ENCODE measurements at regions of chr17 and their contacts with region 1.

Region 1: DNA sequence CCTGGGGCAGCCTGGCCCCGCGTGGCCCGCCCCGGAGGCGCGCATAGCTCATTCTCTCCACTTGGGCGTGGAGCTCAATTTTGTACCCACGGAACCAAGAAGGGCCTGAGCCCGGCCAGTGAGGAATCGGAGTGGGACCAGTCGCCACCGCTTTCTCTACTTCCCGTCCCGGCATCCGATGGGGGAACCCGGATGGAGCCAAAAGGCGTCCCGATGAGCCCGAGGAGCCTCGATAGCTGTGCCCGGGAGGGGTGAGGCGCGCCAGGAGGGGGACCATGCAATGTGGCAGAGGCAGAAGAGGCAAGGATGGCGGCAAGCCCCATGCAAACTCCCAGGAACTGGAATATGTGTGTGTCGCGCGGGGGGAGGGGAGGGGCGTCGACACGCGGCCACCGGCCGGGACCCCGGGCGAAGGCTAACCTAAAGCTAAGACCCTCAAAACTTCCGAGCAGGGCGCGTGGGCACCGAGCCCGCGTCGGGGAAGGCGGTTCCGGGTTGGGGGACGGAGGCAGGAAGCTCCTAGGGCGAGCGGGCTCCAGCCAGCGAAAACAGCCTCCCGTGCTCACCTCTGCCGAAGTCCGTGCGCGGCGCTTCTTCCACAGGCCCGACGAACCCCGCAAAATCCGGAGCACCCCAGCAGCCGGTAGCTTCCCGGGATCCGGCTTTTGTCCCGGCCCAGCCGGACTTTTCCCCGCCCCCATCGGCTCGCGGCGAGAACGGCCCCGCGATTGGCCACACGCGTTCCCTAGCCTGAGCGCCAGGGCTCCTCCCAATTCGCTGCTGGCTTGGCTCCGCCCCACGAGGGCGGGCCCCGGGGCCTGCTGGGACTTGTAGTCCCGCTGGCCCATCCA is at the start of gene ACLY:
- DNase-seq: peak; percentile 91 to 97
- ATAC-seq: peak; percentile 98 to 99 (median 99)
- H3K4me3 ChIP-seq: peak within 1 kb of the TSS; percentile 89
- H3K4me3 Mint-ChIP-seq: peak within 1 kb of the TSS; percentile 96
- H3K27ac ChIP-seq: peak within 1 kb of the TSS; percentile 58
- H3K27ac Mint-ChIP-seq: peak within 1 kb of the TSS; percentile 74 to 91
- H3K4me1 ChIP-seq: peaks cover 20% of the 10 kb centered on the region
- H3K4me1 Mint-ChIP-seq: peaks cover 30 to 37% of the 10 kb centered on the region in 2 donors
- H3K27me3 ChIP-seq: no peaks in the 10 kb centered on the region
- H3K27me3 Mint-ChIP-seq: no peaks in the 10 kb centered on the region
- CTCF ChIP-seq: no peak
- total RNA-seq, gene ACLY: 86.5 to 106 (median 106) TPM

Region 2: DNA sequence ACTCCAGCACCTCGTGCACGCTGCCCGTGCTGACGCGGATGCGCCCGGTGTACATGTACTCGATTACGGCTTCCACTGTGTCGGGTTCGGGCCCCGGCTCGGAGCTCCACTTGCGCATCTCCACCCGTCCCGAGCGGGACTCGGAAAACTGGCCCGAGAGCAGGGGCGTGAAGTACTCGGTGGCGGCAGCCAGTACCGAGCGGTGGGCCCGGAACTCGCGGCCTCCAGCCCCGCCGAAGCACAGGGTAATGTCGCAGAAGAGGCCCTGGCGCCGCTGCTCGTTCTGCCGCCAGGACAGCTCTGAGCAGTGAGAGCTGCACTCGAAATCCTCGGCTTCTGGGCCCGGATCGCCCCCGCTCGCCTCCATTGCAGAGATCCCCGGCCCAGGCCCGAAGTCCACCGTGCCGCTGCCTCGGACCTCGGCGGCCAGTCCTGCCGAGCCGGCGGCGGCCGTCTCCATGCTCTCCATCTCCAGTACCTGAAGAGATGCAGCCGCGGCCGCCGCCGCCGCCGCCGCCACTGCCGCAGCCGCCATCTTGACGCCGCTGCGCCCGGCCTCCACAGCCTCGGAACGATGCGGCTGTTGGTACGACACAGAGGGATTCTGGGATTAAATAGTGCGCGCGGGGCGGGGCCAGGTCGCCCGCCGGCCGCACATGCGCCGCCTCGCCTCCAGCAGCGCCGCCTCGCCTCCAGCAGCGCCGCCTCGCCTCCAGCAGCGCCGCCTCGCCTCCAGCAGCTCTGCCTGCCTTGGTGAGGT is 53.5 kb before region 1 on chr17 and contains the start of gene KLHL11:
- intact Hi-C with region 1: loop called (anchors 1 kb)
- DNase-seq: peak; percentile 83 to 94
- ATAC-seq: peak; percentile 91 to 97 (median 93)
- H3K4me3 ChIP-seq: peak within 1 kb of the TSS; percentile 86
- H3K4me3 Mint-ChIP-seq: no peak within 1 kb of the TSS
- H3K27ac ChIP-seq: peak within 1 kb of the TSS; percentile 81
- H3K27ac Mint-ChIP-seq: no peak within 1 kb of the TSS
- H3K4me1 ChIP-seq: peaks cover 27% of the 10 kb centered on the region
- H3K4me1 Mint-ChIP-seq: peaks cover 16 to 17% of the 10 kb centered on the region in 2 donors
- H3K27me3 ChIP-seq: no peaks in the 10 kb centered on the region
- H3K27me3 Mint-ChIP-seq: no peaks in the 10 kb centered on the region
- CTCF ChIP-seq: no peak
- total RNA-seq, gene KLHL11: 19.4 to 29.0 (median 28.2) TPM

Region 3: GRCh38 chr17:41895617-41896016 is 22.9 kb before region 1 on chr17:
- intact Hi-C with region 1: no loop called
- DNase-seq: no peak
- ATAC-seq: no peak
- H3K4me3 ChIP-seq: no peak overlapping the region
- H3K4me3 Mint-ChIP-seq: no peak overlapping the region
- H3K27ac ChIP-seq: no peak overlapping the region
- H3K27ac Mint-ChIP-seq: no peak overlapping the region
- H3K4me1 ChIP-seq: no peaks in the 10 kb centered on the region
- H3K4me1 Mint-ChIP-seq: peaks cover 0 to 5% of the 10 kb centered on the region in 2 donors
- H3K27me3 ChIP-seq: no peaks in the 10 kb centered on the region
- H3K27me3 Mint-ChIP-seq: no peaks in the 10 kb centered on the region
- CTCF ChIP-seq: no peak

Region 4: DNA sequence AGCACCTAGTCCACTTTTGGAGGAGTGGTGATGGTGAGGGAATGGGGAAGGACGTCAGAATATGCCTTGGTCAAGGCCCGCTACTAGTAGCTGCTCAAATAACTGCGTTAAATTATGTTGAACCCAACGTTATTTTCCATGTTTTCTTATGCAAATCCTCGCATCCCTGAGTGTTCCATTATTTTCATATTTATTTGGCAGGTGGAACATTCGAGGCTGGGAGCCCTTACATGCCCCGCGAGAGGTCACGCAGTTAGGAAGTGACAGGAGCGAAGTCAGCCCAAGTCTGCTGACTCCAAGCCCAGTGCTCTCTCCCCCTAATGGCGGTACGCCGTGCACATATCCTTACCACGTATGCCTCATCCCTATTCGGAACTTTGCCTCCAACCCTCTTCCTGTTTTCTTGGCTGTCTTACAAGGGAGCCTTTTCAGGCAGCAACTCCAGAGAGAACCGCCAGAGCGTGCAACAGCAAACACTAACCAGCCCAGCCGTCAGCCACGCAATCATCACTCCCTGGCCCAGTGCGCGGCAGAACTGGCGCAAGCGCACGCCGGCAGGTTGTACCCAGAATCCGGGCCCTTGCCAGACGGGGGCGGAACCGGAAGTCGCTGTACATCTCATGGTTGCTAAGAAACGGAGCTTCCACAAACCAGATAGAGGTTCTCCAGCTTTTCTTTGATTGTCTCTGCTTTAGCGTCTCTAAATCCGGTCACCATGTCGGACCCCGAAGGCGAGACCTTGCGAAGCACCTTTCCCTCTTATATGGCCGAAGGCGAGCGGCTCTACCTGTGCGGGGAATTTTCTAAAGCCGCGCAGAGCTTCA is 11.7 kb after region 1 on chr17 and contains the start of gene ODAD4:
- intact Hi-C with region 1: loop called (anchors 1 kb)
- DNase-seq: peak; percentile 92 to 99
- ATAC-seq: peak; percentile 98 to 100 (median 98)
- H3K4me3 ChIP-seq: peak within 1 kb of the TSS; percentile 48
- H3K4me3 Mint-ChIP-seq: peak within 1 kb of the TSS; percentile 99
- H3K27ac ChIP-seq: peak within 1 kb of the TSS; percentile 77
- H3K27ac Mint-ChIP-seq: peak within 1 kb of the TSS; percentile 97
- H3K4me1 ChIP-seq: peaks cover 15% of the 10 kb centered on the region
- H3K4me1 Mint-ChIP-seq: peaks cover 18 to 24% of the 10 kb centered on the region in 2 donors
- H3K27me3 ChIP-seq: no peaks in the 10 kb centered on the region
- H3K27me3 Mint-ChIP-seq: no peaks in the 10 kb centered on the region
- CTCF ChIP-seq: peak; percentile 19
- total RNA-seq, gene ODAD4: 0.70 to 2.9 (median 0.95) TPM

Region 5: GRCh38 chr17:41966463-41967140 is 48.1 kb after region 1 on chr17 and contains the start of gene CNP:
- intact Hi-C with region 1: loop called (anchors 2 kb)
- DNase-seq: peak; percentile 88 to 95
- ATAC-seq: peak; percentile 92 to 95 (median 92)
- H3K4me3 ChIP-seq: peak within 1 kb of the TSS; percentile 91
- H3K4me3 Mint-ChIP-seq: peak within 1 kb of the TSS; percentile 74
- H3K27ac ChIP-seq: peak within 1 kb of the TSS; percentile 72
- H3K27ac Mint-ChIP-seq: peak within 1 kb of the TSS; percentile 68 to 76
- H3K4me1 ChIP-seq: peaks cover 27% of the 10 kb centered on the region
- H3K4me1 Mint-ChIP-seq: peaks cover 24 to 32% of the 10 kb centered on the region in 2 donors
- H3K27me3 ChIP-seq: no peaks in the 10 kb centered on the region
- H3K27me3 Mint-ChIP-seq: no peaks in the 10 kb centered on the region
- CTCF ChIP-seq: no peak
- total RNA-seq, gene CNP: 32.4 to 44.8 (median 38.2) TPM

Measured in natural killer cell (primary cell).